CD8-positive, alpha-beta T cell (primary cell): ENCODE measurements at regions of chr7 and their contacts with region 1.

Region 1: DNA sequence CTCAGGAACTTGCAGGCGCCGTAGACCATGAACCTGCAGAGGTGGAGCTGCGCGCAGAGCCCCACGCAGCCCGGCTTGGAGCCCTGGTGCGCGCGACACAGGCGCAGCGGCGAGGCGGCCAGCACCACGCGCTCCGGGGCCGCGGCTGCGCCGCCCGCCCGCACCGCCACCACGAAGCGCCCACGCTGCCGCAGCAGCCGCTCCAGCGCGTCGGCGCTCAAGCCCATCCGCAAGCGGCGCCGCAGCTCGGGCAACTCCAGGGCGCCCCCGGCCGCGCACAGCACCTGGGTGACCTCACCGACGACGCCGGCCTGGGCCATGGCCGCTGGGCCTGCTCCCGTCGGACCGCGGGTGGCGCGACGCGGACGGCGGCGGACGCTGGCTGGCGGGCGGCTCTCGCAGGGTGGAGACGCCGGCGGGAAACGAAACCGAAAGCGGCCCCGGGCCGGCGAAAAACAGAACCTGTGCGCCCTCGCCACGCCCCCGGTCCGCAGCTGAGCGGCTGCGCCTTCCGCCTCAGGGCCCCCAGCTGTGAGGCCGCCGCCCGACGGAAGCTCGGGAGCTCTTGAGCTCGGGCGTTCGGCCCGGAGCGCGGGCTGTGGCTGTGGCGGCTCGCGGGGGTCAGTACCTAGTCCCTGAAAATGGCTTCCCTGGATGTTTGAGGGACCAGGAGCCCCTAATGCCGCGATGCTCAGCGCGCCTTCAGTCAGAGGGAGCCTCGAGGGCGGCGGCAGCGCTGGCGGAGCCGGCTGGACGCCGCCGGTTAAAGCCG is at the start of gene PARP12:
- DNase-seq: peak; percentile 78 to 94 (median 87)
- ATAC-seq: peak; percentile 76
- H3K4me3 ChIP-seq: peak within 1 kb of the TSS; percentile 68 to 86
- H3K4me3 Mint-ChIP-seq: peak within 1 kb of the TSS; percentile 95
- H3K27ac ChIP-seq: peak within 1 kb of the TSS; percentile 82
- H3K27ac Mint-ChIP-seq: peak within 1 kb of the TSS; percentile 94
- H3K4me1 ChIP-seq: peaks cover 34% of the 10 kb centered on the region
- H3K4me1 Mint-ChIP-seq: peaks cover 42% of the 10 kb centered on the region
- H3K27me3 ChIP-seq: no peaks in the 10 kb centered on the region
- H3K27me3 Mint-ChIP-seq: no peaks in the 10 kb centered on the region
- CTCF ChIP-seq: no peak
- total RNA-seq, gene PARP12: 70.3 to 85.5 TPM

Region 2: GRCh38 chr7:139340037-139340807 is 722.5 kb before region 1 on chr7:
- CTCF ChIA-PET with region 1: no interaction called
- POLR2A ChIA-PET with region 1: no interaction called
- intact Hi-C with region 1: loop called in 1 of 2 experiments (anchors 5 kb)
- DNase-seq: peak; percentile 95 to 100 (median 97)
- ATAC-seq: peak; percentile 80
- H3K4me3 ChIP-seq: peak overlapping the region; percentile 69 to 85
- H3K4me3 Mint-ChIP-seq: peak overlapping the region; percentile 98
- H3K27ac ChIP-seq: peak overlapping the region; percentile 94 to 98
- H3K27ac Mint-ChIP-seq: peak overlapping the region; percentile 100
- H3K4me1 ChIP-seq: peaks cover 13% of the 10 kb centered on the region
- H3K4me1 Mint-ChIP-seq: peaks cover 32% of the 10 kb centered on the region
- H3K27me3 ChIP-seq: no peaks in the 10 kb centered on the region
- H3K27me3 Mint-ChIP-seq: peaks cover 2% of the 10 kb centered on the region
- CTCF ChIP-seq: peak; percentile 36

Region 3: GRCh38 chr7:140084972-140085371 is 22.3 kb after region 1 on chr7:
- CTCF ChIA-PET with region 1: no interaction called
- POLR2A ChIA-PET with region 1: interaction called, 17 read pairs
- intact Hi-C with region 1: loop called in 1 of 2 experiments (anchors 2 kb)
- DNase-seq: peak in 5 of 9 experiments; percentile 26 to 56 (median 44)
- ATAC-seq: peak; percentile 61
- H3K4me3 ChIP-seq: no peak overlapping the region
- H3K4me3 Mint-ChIP-seq: peak overlapping the region; percentile 44
- H3K27ac ChIP-seq: peak overlapping the region in 1 of 2 experiments; percentile 44
- H3K27ac Mint-ChIP-seq: peak overlapping the region; percentile 70
- H3K4me1 ChIP-seq: peaks cover 16% of the 10 kb centered on the region
- H3K4me1 Mint-ChIP-seq: peaks cover 37% of the 10 kb centered on the region
- H3K27me3 ChIP-seq: no peaks in the 10 kb centered on the region
- H3K27me3 Mint-ChIP-seq: no peaks in the 10 kb centered on the region
- CTCF ChIP-seq: no peak